ENCODE measurements at regions of chr6 and their contacts with region 1.

Region 1: DNA sequence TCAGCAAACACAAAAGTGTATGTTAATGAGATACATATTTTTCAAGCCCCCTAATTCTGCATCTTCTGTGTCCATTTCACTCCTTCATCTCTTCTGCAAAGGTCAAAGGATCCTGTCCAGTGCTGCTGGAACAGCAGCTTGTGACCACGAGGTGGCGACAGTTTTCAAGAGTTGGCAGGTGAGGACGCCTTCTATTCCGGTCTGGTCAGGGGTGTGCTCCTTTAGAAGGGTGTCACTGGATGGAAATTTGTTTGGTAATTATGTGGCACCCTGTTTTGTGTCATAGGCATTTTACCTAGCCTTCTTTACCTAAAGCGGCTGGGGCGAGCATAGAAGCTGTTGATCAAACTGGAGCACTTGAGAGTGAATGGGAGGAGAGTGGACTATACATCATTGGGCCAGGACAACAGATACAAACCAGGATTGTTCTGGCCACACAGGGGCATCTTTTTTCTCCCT is 32.9 kb upstream of the ERVFRD-1 start:
- DNase-seq: peak; percentile 72
- ATAC-seq: peak; percentile 76
- H3K4me3 ChIP-seq: no peak overlapping the region
- H3K27ac ChIP-seq: no peak overlapping the region
- H3K4me1 ChIP-seq: peaks cover 4% of the 10 kb centered on the region; the same call in 1 of the 2 replicates
- H3K27me3 ChIP-seq: no peaks in the 10 kb centered on the region
- CTCF ChIP-seq: peak; percentile 88
- POLR2A ChIP-seq: 0 out of 2 replicates have a peak, but pooled peaks have one; percentile 49
- RAD21 ChIP-seq: peak; percentile 96

Region 2: DNA sequence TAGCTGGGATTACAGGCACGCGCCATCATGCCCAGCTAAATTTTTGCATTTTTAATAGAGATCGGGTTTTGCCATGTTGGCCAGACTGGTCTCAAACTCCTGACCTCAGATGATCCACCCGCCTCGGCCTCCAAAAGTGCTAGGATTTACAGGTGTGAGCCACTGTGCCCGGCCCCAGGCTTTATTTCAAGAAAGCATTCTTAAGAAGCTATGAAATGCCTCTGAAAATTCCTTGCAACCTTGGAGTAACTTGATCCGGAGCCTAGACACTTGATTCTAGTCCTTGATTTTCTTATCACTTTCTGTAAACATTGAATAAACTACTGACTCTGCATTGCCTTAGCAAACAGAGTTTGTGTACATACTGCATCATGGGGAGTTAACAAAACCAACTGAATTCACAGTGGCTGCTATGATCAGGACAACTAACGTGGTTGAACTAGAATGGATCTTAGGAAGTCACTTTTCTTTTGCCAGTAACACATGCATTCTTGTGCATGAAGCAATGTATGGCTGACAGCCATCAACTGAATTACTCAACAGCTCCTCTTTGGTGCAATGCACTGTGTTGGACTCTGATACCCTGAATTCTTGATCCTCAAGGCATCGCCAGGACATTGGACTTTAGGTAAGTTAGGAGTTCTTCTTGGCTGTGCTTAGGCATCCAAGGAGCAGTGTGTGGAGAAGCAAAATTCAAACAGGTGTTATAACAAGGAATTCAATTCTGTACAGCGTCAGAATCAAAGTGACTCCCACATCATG is 290.3 kb after region 1 on chr6:
- CTCF ChIA-PET with region 1: no interaction called
- POLR2A ChIA-PET with region 1: no interaction called
- dilution Hi-C with region 1: no loop called
- in situ Hi-C with region 1: no loop called
- intact Hi-C with region 1: loop called (anchors 5 kb)
- DNase-seq: peak; percentile 94
- ATAC-seq: peak; percentile 86
- H3K4me3 ChIP-seq: no peak overlapping the region
- H3K27ac ChIP-seq: peak overlapping the region; percentile 68; the same call in 1 of the 2 replicates
- H3K4me1 ChIP-seq: peaks cover 24% of the 10 kb centered on the region
- H3K27me3 ChIP-seq: no peaks in the 10 kb centered on the region
- CTCF ChIP-seq: no peak
- POLR2A ChIP-seq: no peak
- RAD21 ChIP-seq: 0 out of 2 replicates have a peak, but pooled peaks have one; percentile 3

Region 3: GRCh38 chr6:11575408-11576033 is 431.1 kb after region 1 on chr6:
- CTCF ChIA-PET with region 1: no interaction called
- POLR2A ChIA-PET with region 1: no interaction called
- dilution Hi-C with region 1: no loop called
- in situ Hi-C with region 1: no loop called
- intact Hi-C with region 1: loop called (anchors 1 kb)
- DNase-seq: peak; percentile 84
- ATAC-seq: peak; percentile 100
- H3K4me3 ChIP-seq: no peak overlapping the region
- H3K27ac ChIP-seq: no peak overlapping the region
- H3K4me1 ChIP-seq: no peaks in the 10 kb centered on the region
- H3K27me3 ChIP-seq: no peaks in the 10 kb centered on the region
- CTCF ChIP-seq: peak; percentile 90
- POLR2A ChIP-seq: no peak
- RAD21 ChIP-seq: peak; percentile 94

Measured in IMR-90 (cell line).